ENCODE measurements at regions of chr1 and their contacts with region 1.

Region 1: DNA sequence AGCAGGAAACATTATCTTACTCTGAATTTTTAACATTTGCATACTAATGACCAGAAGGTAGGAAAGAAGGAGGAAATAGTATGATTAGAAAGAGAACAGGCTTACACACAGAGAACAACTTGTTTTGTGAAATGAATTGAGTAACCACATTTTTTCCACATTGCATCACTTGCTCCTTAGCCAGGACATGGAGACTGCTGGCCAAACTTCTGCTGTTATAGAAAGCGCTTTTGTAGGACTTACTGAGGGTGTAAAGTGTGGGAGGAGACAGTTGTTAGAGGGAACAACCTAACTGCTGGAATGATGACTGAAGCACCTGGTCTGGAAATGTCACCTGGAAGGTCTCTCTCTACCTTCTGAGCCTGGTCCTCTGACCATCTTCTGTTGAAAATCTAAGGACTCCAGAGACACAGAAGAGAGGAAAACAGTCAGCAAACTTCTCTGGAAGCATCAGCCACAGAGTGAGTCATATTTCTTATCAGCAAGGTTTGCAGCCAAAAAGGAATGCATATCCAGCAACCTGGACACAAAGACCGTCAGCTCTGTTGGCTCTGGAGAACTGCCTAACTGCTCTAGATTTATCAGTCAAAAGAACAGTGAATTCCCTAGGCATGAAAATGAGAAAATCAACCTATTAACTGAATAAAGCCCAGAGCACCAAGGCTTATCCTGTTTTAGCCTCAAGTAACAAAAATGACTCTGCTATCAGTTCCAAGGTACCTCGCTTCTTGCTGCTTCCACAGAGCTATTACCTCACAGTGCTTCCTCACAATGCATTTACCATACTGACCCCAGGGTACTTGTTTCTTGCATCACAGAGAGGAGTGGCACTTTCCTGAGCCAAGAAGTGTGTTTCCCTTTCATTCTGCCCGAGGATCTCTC is 88.0 kb upstream of the SLFNL1 start:
- DNase-seq: peak in 1 of 2 donors; percentile 93
- H3K4me3 ChIP-seq: no peak overlapping the region
- H3K27ac ChIP-seq: peak overlapping the region; percentile 82
- H3K4me1 ChIP-seq: peaks cover 26% of the 10 kb centered on the region
- H3K27me3 ChIP-seq: no peaks in the 10 kb centered on the region
- CTCF ChIP-seq: no peak
- POLR2A ChIP-seq: no peak

Region 2: DNA sequence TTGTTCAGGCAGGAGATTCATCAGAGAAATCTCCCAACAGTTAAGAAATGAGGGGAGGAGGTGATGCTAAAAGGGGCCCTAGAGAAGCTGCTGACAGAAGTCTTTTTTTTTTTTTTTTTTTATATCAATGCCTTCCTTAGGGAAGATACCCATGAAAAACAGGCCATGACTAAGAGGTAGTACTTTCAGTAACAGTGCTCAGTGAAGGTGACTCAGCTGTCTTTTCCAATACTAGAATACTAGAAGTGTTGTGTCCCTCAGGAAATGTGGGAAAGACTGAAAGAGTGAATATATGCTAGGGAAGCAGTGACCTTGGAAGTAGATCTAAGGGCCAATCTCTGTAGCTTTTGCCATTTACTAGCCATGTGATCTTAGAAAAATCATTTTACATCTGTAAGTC is 35.6 kb before region 1 on chr1:
- intact Hi-C with region 1: no loop called
- DNase-seq: no peak
- H3K4me3 ChIP-seq: no peak overlapping the region
- H3K27ac ChIP-seq: no peak overlapping the region
- H3K4me1 ChIP-seq: no peaks in the 10 kb centered on the region
- H3K27me3 ChIP-seq: no peaks in the 10 kb centered on the region
- CTCF ChIP-seq: no peak
- POLR2A ChIP-seq: no peak

Region 3: DNA sequence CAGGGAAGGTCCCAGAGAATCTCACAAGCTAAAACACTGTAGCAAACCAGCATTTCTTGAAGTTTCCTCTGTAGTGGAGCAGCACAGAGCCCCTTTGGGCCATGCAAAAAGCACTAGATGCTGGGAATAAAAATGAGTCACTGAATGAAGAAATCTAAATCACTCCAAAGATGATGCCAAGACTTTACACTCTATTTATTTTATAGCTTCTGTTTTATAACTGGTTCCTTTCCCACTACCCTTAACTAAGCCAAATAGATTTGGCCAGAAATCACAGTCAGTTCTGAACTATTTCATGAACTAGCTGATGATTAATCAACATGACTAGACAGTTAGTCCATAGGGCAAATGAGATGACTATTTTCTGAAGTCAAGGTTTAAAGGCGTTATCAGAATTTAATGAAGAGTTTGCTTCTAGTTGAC is 43.1 kb after region 1 on chr1:
- intact Hi-C with region 1: loop called (anchors 10 kb)
- DNase-seq: no peak
- H3K4me3 ChIP-seq: no peak overlapping the region
- H3K27ac ChIP-seq: peak overlapping the region; percentile 66
- H3K4me1 ChIP-seq: peaks cover 17% of the 10 kb centered on the region
- H3K27me3 ChIP-seq: no peaks in the 10 kb centered on the region
- CTCF ChIP-seq: no peak
- POLR2A ChIP-seq: no peak

Region 4: DNA sequence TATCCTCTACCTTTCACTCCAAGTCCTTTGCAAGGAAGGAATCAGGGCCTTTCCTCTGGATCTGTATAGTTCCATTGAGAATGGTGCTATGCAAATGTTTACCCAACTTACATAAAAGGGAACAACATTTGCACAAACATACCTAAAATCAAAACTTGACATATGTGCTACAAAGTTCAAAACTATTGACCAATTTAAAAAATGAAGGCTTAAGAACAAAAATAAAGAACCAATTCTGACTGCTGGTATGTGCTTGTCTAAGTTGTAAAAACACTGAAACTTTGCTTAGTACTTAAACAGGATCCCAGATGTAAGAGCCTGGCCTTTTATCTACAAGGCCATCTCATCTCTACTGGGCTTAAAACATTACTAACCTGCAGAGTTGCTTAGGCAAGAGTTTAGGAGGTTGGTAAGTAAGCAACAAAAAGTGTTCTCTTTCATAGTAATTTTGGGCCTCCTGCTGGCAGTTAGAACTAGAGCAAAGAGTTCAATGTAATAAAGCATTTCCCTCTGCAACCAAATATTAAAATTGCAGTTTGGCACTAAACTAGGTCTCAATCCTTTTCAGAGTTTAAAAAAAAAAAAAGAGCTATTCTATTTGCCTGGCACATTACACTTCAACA is 130.5 kb after region 1 on chr1:
- intact Hi-C with region 1: loop called (anchors 2 kb)
- DNase-seq: no peak
- H3K4me3 ChIP-seq: no peak overlapping the region
- H3K27ac ChIP-seq: no peak overlapping the region
- H3K4me1 ChIP-seq: peaks cover 30% of the 10 kb centered on the region
- H3K27me3 ChIP-seq: no peaks in the 10 kb centered on the region
- CTCF ChIP-seq: no peak
- POLR2A ChIP-seq: no peak